Activated CD4-positive, alpha-beta memory T cell treated with anti-CD3 and anti-CD28 coated beads for 36 hours (primary cell): ENCODE measurements at regions of chr14 and their contacts with region 1.

Region 1: GRCh38 chr14:20400965-20401593 is 12.2 kb downstream of the TEP1 start:
- DNase-seq: peak; percentile 43
- H3K4me3 Mint-ChIP-seq: peak overlapping the region; percentile 52
- H3K27ac Mint-ChIP-seq: peak overlapping the region; percentile 95
- H3K4me1 Mint-ChIP-seq: peaks cover 30% of the 10 kb centered on the region
- H3K27me3 Mint-ChIP-seq: no peaks in the 10 kb centered on the region

Region 2: DNA sequence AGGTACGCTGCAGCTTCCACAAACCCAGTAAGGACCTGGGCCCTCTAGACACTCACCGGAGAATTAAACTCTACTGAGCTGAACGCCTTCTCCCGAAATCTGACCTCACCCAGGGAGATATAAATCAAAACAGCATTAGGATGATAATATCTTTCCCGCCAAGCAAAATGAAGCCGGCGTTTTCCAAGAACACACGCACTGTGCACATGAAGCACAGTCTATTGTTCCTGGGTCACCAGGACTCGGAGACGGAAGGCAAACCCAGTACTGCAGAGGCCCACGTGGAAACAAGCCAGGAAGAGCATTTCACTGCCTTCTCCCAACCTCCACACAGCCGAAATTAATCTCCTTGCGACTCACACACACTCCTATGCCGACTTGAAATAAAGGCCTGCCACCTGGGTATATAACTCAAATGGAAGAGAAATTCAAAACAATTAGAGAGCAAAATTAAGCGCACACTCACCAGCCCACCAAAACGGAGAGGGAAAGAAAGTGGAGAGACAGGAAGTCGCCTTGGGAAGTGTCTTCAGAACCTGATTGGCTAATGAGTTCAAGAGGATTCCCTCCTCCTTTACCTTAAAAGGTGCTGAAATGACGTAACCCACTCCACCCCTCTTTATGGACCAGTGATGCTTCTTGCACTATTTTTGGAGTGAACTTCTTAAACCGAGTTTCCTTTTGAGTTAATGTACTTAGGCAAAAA is 68.1 kb before region 1 on chr14 and contains the start of gene CCNB1IP1:
- CTCF ChIA-PET with region 1: interaction called, 6 read pairs
- POLR2A ChIA-PET with region 1: interaction called, 5 read pairs
- intact Hi-C with region 1: loop called (anchors 1 kb)
- DNase-seq: peak; percentile 54
- H3K4me3 Mint-ChIP-seq: peak within 1 kb of the TSS; percentile 99
- H3K27ac Mint-ChIP-seq: peak within 1 kb of the TSS; percentile 92
- H3K4me1 Mint-ChIP-seq: peaks cover 36% of the 10 kb centered on the region
- H3K27me3 Mint-ChIP-seq: no peaks in the 10 kb centered on the region
- total RNA-seq, gene CCNB1IP1: 70.2 to 77.4 TPM

Region 3: DNA sequence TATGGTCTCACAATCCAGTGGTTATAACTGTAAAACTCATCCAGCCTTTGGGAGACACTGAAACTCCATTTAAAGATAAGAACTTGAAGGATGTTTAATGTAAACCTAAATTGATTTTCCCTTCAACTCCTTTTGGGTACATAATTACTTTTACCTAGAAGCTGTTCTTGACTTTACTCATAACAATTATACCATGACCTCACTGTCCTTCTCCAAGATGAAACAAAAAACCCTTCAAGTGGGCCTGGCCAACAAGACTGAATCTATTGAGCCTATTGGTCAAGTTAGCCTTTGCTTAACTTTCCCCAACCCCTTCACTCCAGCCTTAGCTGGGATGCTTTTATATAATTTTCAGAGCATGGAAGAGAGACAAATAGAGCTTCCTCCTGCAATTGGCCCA is 35.2 kb before region 1 on chr14:
- CTCF ChIA-PET with region 1: no interaction called
- POLR2A ChIA-PET with region 1: interaction called, 3 read pairs
- intact Hi-C with region 1: loop called (anchors 1 kb)
- DNase-seq: no peak
- H3K4me3 Mint-ChIP-seq: no peak overlapping the region
- H3K27ac Mint-ChIP-seq: no peak overlapping the region
- H3K4me1 Mint-ChIP-seq: peaks cover 29% of the 10 kb centered on the region
- H3K27me3 Mint-ChIP-seq: no peaks in the 10 kb centered on the region

Region 4: DNA sequence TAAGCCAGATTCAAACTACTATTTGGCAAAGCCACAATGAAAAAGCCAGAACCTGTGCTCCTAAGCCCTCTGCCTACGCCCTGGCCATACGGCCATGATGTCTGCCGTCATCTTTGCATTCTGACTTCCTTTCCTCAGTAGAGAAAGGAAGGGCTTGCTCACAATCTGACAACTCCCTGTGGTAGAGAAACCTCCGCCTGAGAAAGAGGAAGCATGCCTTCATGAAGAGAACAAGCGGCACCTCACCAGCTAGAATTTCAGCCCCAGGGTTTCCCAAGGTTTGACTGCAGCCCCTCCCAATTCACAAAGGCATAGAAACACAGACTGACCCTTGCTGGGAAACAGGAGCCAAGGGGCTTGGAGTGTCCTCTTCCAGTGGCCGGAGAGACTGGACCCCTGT is 13.5 kb before region 1 on chr14:
- CTCF ChIA-PET with region 1: no interaction called
- POLR2A ChIA-PET with region 1: no interaction called
- intact Hi-C with region 1: no loop called
- DNase-seq: no peak
- H3K4me3 Mint-ChIP-seq: no peak overlapping the region
- H3K27ac Mint-ChIP-seq: no peak overlapping the region
- H3K4me1 Mint-ChIP-seq: no peaks in the 10 kb centered on the region
- H3K27me3 Mint-ChIP-seq: no peaks in the 10 kb centered on the region

Region 5: GRCh38 chr14:20454516-20455354 is 53.7 kb after region 1 on chr14 and contains the starts of genes APEX1 and OSGEP:
- CTCF ChIA-PET with region 1: no interaction called
- POLR2A ChIA-PET with region 1: interaction called, 7 read pairs
- intact Hi-C with region 1: loop called (anchors 1 kb)
- DNase-seq: peak; percentile 99
- H3K4me3 Mint-ChIP-seq: peak within 1 kb of the TSS; percentile 13
- H3K27ac Mint-ChIP-seq: no peak within 1 kb of the TSS
- H3K4me1 Mint-ChIP-seq: peaks cover 22% of the 10 kb centered on the region
- H3K27me3 Mint-ChIP-seq: no peaks in the 10 kb centered on the region
- total RNA-seq, gene APEX1: 186 to 193 TPM
- total RNA-seq, gene OSGEP: 39.2 to 41.0 TPM

Region 6: DNA sequence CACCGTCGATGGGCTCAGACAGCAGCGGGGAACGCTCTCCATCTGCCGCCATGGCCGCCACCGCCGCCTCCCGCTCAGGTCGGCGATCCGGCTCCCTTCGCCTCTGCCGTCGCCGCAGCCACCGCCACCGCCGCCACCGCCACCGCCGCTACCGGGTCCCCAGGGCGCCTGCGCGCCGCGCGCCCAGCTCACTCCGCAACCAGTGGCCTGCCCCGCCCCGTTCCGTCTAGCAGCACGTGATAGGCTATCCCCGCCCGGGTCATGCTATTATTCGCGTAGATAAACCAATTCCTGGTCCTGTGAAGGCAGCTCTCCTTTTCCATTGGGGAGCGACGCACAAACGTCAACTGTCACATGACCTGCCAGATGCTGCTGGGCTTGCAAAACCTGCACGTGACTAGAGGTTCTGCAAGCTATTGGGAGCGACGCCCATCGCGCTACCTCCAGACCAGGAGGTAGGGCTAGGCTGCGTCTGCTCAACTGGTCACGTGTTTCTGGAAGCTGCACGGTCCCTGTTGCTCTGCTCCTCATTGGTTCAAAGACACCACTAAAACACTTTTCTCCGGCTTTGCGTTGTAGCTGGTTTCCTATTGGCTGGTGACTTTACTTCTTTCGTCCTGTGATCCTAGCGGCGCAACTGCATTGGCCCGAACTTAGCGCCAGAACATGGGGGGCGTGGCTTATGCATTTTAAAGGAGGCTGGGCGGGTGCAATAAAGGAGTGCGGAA is 60.4 kb after region 1 on chr14 and contains the start of gene PIP4P1:
- CTCF ChIA-PET with region 1: no interaction called
- POLR2A ChIA-PET with region 1: interaction called, 5 read pairs
- intact Hi-C with region 1: loop called (anchors 1 kb)
- DNase-seq: peak; percentile 99
- H3K4me3 Mint-ChIP-seq: peak within 1 kb of the TSS; percentile 91
- H3K27ac Mint-ChIP-seq: peak within 1 kb of the TSS; percentile 93
- H3K4me1 Mint-ChIP-seq: peaks cover 33% of the 10 kb centered on the region
- H3K27me3 Mint-ChIP-seq: no peaks in the 10 kb centered on the region
- total RNA-seq, gene PIP4P1: 31.1 to 35.2 TPM